ENCODE measurements at regions of chr18 and their contacts with region 1.

Region 1: DNA sequence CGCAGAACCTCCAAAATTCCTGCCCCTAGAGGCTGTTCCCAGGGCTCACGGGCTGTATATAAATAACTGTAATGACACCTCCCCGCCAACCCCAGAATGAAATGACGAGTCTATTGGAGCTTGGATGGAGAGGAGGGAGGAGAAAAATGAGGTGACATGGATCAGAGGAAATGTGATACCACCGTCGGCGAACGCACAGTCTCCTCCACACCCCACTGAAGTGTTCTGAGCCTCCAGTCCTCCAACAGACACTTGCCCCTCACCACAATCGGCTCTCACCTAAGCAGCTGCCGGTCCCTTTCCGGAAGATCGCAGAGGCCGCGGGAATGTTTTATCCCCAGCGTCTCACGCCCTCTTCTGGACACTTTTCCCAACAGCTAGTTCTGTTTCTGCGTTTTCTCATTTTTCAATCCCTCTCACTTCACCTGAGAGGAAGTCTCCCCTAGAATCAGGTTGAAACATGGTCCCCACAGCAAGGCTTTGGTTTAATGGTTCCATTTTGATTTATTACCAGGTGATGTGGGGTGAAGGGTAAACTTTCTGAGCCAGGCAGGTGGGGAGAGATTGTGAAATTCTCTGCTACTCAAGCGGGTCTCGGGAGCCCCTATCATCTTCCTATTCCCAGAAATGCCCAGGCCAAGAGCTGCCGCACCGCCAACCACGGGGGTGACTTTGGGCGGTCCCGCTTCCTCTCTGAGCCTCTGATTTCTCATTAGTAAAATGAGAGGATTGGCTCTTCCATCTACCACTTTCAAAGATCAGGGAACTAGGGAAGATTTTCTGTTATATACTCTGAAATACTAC is 9.1 kb upstream of the MYO5B start:
- DNase-seq: peak; percentile 70
- H3K4me3 Mint-ChIP-seq: peak overlapping the region; percentile 37
- H3K27ac Mint-ChIP-seq: no peak overlapping the region
- H3K4me1 Mint-ChIP-seq: no peaks in the 10 kb centered on the region
- H3K27me3 Mint-ChIP-seq: peaks cover 11% of the 10 kb centered on the region
- CTCF ChIP-seq: peak; percentile 68

Region 2: DNA sequence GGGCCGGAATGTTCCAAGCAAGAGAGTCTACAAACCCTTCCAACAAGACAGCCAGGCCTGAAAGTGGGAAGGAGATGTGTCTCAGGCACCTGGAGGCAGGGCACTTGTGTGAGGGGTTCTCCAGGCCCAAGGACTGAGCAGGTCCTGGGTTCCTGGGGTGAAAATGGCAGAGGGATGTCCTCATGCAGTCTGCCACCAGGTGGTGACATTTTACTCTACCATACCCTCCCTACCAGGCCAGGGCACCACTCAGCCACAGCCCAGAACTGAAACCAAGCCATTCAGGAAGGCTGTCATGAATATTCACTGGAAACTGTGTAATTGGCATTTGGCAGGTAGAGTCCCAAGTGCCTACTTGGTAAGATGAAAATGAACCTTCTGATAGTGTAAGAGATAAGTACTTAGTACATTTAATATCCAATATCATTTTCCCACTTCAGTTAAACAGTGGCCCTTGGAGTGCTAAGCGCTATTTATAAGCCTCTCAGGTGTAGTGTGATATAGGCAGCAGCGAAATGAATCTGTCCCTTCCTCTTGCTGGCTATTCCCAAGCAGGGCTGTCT is 194.1 kb before region 1 on chr18:
- CTCF ChIA-PET with region 1: interaction called, 3 read pairs
- POLR2A ChIA-PET with region 1: interaction called, 4 read pairs
- intact Hi-C with region 1: loop called (anchors 1 kb)
- DNase-seq: peak; percentile 60
- H3K4me3 Mint-ChIP-seq: no peak overlapping the region
- H3K27ac Mint-ChIP-seq: peak overlapping the region; percentile 5
- H3K4me1 Mint-ChIP-seq: peaks cover 21% of the 10 kb centered on the region
- H3K27me3 Mint-ChIP-seq: no peaks in the 10 kb centered on the region
- CTCF ChIP-seq: peak; percentile 33

Region 3: DNA sequence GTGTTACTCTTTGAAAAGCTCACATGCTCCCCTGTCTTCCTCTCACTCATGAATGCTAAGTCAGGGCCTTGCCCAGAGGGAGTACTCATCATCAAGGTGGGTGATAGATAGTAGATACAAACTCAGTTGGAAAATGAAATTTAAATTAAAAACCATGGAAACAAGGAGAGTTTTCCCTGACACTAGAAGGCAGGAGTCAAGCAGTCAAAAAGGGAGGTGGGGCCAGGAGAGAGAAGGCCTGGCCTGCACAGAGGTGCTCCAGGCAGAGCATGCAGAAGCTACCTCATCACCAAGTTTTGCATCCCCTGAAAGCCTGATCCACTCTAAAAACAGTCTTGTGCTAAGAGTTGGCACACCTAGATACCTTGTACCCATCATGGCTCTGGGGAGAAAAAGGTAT is 152.7 kb before region 1 on chr18:
- CTCF ChIA-PET with region 1: interaction called, 17 read pairs
- POLR2A ChIA-PET with region 1: interaction called, 5 read pairs
- intact Hi-C with region 1: loop called (anchors 1 kb)
- DNase-seq: peak; percentile 41
- H3K4me3 Mint-ChIP-seq: no peak overlapping the region
- H3K27ac Mint-ChIP-seq: no peak overlapping the region
- H3K4me1 Mint-ChIP-seq: no peaks in the 10 kb centered on the region
- H3K27me3 Mint-ChIP-seq: no peaks in the 10 kb centered on the region
- CTCF ChIP-seq: peak; percentile 34

Region 4: DNA sequence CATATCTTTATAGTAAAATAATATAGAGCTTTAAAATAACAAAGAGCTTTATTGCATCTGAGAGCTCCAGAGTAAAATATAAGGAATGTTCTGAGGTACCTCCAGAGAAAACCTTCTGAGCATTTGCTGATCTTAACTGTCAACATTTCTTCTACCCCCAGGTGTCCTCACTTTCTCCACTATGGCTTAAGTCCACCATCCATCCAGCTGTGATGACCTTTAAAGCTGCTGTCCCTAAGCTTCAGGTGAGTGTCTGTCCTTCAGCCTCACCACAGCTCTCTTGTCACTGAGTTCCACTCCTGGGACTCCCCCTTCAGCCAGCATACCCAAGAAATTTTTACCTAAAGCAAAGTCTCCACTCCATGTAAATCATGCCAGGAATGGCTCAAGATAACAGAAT is 147.0 kb before region 1 on chr18:
- CTCF ChIA-PET with region 1: interaction called, 11 read pairs
- POLR2A ChIA-PET with region 1: no interaction called
- intact Hi-C with region 1: no loop called
- DNase-seq: no peak
- H3K4me3 Mint-ChIP-seq: no peak overlapping the region
- H3K27ac Mint-ChIP-seq: no peak overlapping the region
- H3K4me1 Mint-ChIP-seq: no peaks in the 10 kb centered on the region
- H3K27me3 Mint-ChIP-seq: no peaks in the 10 kb centered on the region
- CTCF ChIP-seq: no peak

Region 5: DNA sequence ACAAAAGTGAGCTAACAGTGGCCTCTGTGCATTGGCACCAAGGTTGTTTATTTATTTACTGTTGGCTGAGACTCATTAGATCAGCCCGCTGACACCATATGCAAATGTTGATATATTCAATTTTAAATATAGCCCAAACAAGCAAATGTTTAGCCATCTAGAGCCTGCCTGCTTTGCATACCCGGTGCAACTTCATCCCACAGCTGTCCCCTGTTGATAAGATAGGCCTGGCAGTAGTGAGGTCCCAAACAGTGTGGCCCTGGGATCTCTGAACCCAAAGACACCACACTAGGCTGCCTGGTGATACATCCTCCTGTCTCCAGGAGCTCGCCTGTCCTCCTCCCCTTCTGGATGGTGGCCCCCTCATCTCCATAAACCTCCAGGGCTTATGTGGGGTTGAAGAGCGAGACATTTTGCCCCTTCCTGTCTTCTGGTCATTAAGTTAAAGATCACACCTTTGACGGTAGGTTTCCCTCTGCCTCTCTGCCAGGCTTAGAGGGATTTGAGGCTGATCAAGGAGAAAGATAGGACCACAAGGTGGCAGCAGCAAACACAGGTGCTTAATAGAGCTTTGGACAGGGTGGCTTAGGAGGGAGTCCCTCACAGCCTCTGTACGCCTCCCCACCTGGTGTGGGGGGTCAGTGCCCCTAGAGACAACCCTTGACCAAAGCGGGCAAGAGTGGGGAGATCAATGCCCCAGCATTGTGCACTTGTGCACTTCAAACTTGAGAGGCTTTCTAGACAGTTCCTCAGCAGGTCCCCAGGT is 14.6 kb after region 1 on chr18:
- CTCF ChIA-PET with region 1: interaction called, 28 read pairs
- POLR2A ChIA-PET with region 1: no interaction called
- intact Hi-C with region 1: no loop called
- DNase-seq: peak; percentile 53
- H3K4me3 Mint-ChIP-seq: no peak overlapping the region
- H3K27ac Mint-ChIP-seq: no peak overlapping the region
- H3K4me1 Mint-ChIP-seq: no peaks in the 10 kb centered on the region
- H3K27me3 Mint-ChIP-seq: no peaks in the 10 kb centered on the region
- CTCF ChIP-seq: peak; percentile 53

Region 6: DNA sequence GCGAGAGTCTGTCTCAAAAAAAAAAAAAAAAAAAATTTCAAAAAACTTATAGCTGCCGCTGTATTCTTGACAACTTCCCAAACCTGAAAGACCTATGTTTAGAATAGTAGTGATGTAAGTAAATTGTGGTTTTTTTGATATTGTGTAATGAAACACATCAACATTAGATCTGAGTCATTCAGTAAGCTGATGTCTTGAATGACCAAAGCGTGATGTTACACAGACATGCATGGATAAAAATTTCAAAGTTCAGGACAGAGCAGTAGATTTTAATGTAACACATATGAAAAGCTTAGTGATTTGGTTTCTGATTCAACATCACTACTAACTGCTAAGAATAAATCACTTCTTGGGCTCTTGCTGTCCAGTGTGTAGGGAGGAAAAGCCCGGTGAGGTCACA is 1062.8 kb after region 1 on chr18:
- CTCF ChIA-PET with region 1: no interaction called
- POLR2A ChIA-PET with region 1: no interaction called
- intact Hi-C with region 1: no loop called
- DNase-seq: peak; percentile 80
- H3K4me3 Mint-ChIP-seq: no peak overlapping the region
- H3K27ac Mint-ChIP-seq: no peak overlapping the region
- H3K4me1 Mint-ChIP-seq: peaks cover 11% of the 10 kb centered on the region
- H3K27me3 Mint-ChIP-seq: no peaks in the 10 kb centered on the region
- CTCF ChIP-seq: no peak